Activated CD4-positive, alpha-beta memory T cell treated with anti-CD3 and anti-CD28 coated beads, Interleukin-2, amount 10 ng/mL, durations not matched to agents 7 days and 5 days (primary cell): ENCODE measurements at regions of chr2 and their contacts with region 1.

Region 1: GRCh38 chr2:225002039-225002655 is 40.1 kb downstream of the DOCK10 start:
- DNase-seq: peak; percentile 69
- H3K4me3 Mint-ChIP-seq: no peak overlapping the region
- H3K27ac Mint-ChIP-seq: peak overlapping the region; percentile 44
- H3K4me1 Mint-ChIP-seq: peaks cover 66% of the 10 kb centered on the region
- H3K27me3 Mint-ChIP-seq: no peaks in the 10 kb centered on the region

Region 2: DNA sequence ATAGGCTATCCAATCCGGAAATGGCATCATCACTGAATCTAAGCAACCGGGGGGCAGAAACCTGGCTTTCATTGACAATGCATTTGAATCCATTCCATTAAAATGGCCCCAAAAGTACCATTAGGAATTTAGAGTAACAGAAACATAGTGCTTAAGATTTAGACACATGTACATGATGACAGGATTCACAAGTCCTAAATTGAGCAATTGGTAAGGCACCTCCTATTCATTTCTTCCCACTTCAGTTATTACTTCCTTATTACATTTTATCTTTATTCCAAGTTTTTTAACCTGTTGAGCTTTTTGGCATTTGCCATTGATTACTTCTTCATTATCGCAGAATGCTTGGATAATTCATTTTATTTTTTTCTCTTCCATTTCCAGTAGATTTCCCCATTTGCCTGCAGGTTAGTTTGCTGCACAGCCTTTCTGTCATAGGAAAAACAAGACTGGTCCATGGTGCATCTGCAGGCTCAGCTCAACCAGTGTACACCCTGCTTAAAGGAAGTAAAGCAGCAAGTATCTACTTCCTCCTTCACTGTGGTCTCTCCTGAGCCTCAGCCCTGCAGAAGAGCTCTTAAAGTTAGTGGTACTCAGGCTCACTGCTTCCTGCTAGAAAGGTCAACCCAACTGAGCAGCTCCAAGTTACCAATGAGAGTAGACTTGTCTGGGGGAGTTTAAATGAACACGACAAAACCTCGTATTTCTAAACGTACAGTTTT is 49.0 kb before region 1 on chr2:
- CTCF ChIA-PET with region 1: interaction called, 22 read pairs
- POLR2A ChIA-PET with region 1: interaction called, 4 read pairs
- DNase-seq: peak; percentile 65
- H3K4me3 Mint-ChIP-seq: peak overlapping the region; percentile 29
- H3K27ac Mint-ChIP-seq: peak overlapping the region; percentile 72
- H3K4me1 Mint-ChIP-seq: peaks cover 79% of the 10 kb centered on the region
- H3K27me3 Mint-ChIP-seq: no peaks in the 10 kb centered on the region

Region 3: DNA sequence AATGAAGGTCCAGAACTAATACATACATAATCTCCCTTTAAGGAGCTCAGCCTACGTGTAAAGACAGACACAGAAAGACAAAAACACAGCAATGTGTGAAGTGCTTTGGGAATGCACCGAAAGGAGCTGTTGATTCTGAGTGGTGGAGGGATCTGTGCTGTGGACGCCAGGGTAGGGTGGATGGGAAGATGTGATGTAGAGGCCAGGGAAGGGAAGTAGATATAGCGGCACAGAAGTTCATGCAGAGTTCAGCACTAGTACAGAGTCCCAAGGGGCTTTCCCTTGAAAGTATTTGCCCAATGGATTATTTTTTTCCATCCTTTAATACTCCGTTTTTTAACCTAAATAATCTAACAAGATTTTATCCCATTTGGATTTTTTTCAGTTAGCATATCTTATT is 72.2 kb after region 1 on chr2:
- CTCF ChIA-PET with region 1: no interaction called
- POLR2A ChIA-PET with region 1: no interaction called
- DNase-seq: no peak
- H3K4me3 Mint-ChIP-seq: no peak overlapping the region
- H3K27ac Mint-ChIP-seq: no peak overlapping the region
- H3K4me1 Mint-ChIP-seq: no peaks in the 10 kb centered on the region
- H3K27me3 Mint-ChIP-seq: no peaks in the 10 kb centered on the region